Esophagus muscularis mucosa (tissue), 4 donors: ENCODE measurements at regions of chr1 and their contacts with region 1.

Region 1: GRCh38 chr1:54121482-54122134 is 31.2 kb downstream of the CDCP2 start:
- DNase-seq: no peak
- H3K4me3 ChIP-seq: peak overlapping the region; percentile 29 to 47 (median 33)
- H3K27ac ChIP-seq: no peak overlapping the region
- H3K4me1 ChIP-seq: peaks cover 8 to 14% (median 13%) of the 10 kb centered on the region in 4 donors
- H3K27me3 ChIP-seq: peaks cover 0 to 9% (median 0%) of the 10 kb centered on the region in 4 donors
- CTCF ChIP-seq: peak; percentile 70 to 85 (median 79)
- EP300 ChIP-seq: no peak
- POLR2A ChIP-seq: no peak

Region 2: GRCh38 chr1:54413295-54413694 is 291.7 kb after region 1 on chr1:
- intact Hi-C with region 1: loop called (anchors 10 kb)
- DNase-seq: no peak
- H3K4me3 ChIP-seq: no peak overlapping the region
- H3K27ac ChIP-seq: peak overlapping the region in 3 of 4 donors; percentile 6 to 28 (median 26)
- H3K4me1 ChIP-seq: peaks cover 16 to 25% (median 22%) of the 10 kb centered on the region in 4 donors
- H3K27me3 ChIP-seq: no peaks in the 10 kb centered on the region
- CTCF ChIP-seq: no peak
- EP300 ChIP-seq: no peak
- POLR2A ChIP-seq: no peak